ENCODE measurements at regions of chr11 and their contacts with region 1.

Region 1: DNA sequence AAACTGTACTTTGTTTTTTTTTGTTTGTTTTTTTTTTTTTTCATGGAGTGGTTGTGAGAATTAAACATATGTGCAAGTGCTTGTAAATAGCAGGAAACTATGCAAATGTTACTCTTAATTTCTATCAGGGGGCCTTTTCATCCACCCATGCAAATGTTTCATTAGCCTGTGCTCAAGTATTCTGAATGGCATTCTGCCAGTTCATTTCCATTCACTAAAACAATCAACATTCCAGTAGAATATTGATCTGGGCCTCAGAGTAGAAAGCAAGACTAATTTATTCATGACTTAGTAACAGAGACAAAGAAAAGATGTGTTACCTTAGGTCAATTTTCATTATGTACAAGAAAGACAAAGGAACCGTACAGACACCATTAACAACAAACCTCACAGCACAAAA is 971.4 kb downstream of the DLG2 start:
- DNase-seq: no peak
- ATAC-seq: no peak
- H3K4me3 ChIP-seq: no peak overlapping the region
- H3K27ac ChIP-seq: no peak overlapping the region
- H3K4me1 ChIP-seq: no peaks in the 10 kb centered on the region
- H3K27me3 ChIP-seq: no peaks in the 10 kb centered on the region
- CTCF ChIP-seq: no peak

Region 2: GRCh38 chr11:84626256-84626655 is 29.5 kb before region 1 on chr11:
- intact Hi-C with region 1: loop called in 1 of 2 experiments (anchors 2 kb)
- DNase-seq: no peak
- ATAC-seq: no peak
- H3K4me3 ChIP-seq: no peak overlapping the region
- H3K27ac ChIP-seq: no peak overlapping the region
- H3K4me1 ChIP-seq: no peaks in the 10 kb centered on the region
- H3K27me3 ChIP-seq: no peaks in the 10 kb centered on the region
- CTCF ChIP-seq: no peak

Region 3: GRCh38 chr11:84686716-84687115 is 31.0 kb after region 1 on chr11:
- intact Hi-C with region 1: no loop called
- DNase-seq: no peak
- ATAC-seq: no peak
- H3K4me3 ChIP-seq: no peak overlapping the region
- H3K27ac ChIP-seq: no peak overlapping the region
- H3K4me1 ChIP-seq: no peaks in the 10 kb centered on the region
- H3K27me3 ChIP-seq: no peaks in the 10 kb centered on the region
- CTCF ChIP-seq: no peak

Region 4: DNA sequence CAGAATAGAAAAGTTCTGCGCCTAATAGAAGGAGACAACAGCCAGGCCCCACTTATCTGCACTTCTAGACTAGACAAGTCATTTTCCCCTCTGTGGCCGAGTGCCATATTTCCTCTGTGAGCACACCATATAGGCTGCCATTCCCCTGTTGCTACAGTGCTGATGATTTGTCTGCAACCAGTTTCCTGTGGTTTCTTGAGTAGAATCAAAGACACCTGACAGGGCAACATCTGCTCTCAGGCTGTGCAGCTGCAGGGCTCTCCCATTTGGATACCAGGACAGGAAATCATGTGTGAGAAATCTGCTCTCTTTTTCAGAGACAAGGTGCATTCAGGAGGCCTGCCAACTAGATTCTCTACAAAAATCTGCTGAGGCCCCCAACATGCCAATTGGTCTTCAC is 92.2 kb after region 1 on chr11:
- intact Hi-C with region 1: no loop called
- DNase-seq: no peak
- ATAC-seq: no peak
- H3K4me3 ChIP-seq: no peak overlapping the region
- H3K27ac ChIP-seq: no peak overlapping the region
- H3K4me1 ChIP-seq: no peaks in the 10 kb centered on the region
- H3K27me3 ChIP-seq: no peaks in the 10 kb centered on the region
- CTCF ChIP-seq: no peak